RWPE1 (cell line): ENCODE measurements at regions of chr17 and their contacts with region 1.

Region 1: GRCh38 chr17:2416010-2416734 is 15.3 kb upstream of the MNT start:
- DNase-seq: peak; percentile 69
- H3K27ac ChIP-seq: peak overlapping the region; percentile 50
- CTCF ChIP-seq: peak; percentile 93

Region 2: DNA sequence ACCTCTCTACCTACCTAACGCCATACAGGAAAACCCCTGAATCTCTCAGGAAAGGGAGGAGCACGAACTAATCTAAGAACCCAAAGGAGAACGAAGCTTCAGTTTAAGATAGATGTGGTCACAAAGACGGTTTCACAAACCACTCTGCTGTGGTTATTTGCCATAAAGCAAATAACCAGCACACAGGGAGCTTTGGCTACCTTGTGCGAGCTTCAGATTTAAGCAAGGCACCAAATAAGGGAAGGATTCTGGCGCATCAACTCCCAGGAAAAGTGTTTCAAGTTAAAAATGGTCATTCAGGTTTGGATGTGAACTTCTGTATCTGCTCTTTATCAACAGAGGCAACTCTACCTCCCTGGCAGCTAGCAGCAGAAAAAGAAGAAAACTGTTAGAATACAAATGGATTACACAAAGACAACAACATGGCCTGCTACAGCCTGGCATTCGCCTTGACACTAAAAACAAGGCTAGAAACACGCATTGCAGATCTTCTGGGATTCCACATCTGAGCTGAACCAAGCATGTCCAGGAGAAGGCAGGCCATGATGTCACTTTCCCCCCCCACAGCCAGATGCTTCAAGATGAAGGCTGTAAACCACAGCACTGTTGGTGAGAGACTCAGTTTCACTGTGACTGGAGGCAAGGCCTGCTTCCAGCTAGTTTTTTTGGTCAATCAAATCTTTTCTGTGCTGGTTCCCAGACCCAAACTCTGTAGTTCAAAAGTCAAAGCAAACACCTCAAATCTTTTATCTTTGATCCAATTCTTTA is 156.2 kb before region 1 on chr17:
- CTCF ChIA-PET with region 1: no interaction called
- POLR2A ChIA-PET with region 1: no interaction called
- DNase-seq: no peak
- H3K27ac ChIP-seq: no peak overlapping the region
- CTCF ChIP-seq: no peak

Region 3: DNA sequence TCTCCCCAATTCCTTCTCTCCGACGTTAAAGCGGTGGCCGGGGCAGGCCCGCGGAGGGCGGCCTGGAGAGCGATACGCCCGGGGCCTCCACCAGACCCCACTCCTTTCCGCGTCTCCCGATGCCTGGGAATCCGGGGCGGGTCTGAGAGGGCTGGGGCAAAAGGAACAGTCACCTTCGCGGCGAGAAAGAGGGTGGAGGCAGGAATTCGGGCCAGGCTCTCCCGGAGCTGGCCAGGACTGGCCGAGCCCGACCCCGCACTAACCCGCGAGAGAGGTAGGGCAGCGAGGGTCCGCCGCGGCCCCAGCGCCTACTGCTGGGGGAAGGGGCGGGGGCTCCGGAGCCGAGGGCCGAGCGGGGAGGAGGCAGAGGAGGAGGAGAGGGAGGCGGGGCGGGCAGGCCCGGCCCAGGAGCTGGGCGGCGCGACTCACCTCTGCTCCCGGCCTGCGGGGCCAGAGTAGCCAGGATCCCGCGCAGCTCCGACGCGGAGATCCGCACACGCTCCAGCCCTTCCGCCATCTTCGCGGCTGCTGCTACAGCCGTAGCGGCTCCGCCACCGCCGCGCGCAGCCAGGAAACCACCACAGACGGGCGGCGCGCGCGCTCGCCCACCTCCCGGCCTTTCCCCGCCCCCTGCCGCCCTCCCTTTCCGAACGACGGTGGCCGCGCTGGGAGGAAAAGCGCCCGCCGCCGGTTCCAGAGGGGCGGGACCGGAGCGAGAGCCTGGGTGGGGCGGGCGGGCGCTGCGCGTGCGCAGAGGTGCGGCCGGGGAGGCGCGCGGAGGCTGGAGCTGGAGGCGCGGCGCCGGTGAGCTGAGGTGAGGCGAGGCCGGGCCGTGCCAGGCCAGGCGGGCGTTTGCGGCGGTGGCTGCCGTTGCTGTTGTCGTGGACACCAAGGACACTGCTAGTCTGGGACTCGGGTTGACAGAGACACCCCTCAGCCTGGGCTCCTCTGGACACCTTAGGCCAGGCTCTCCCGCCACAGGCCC is 112.7 kb before region 1 on chr17 and contains the starts of genes SMG6 and SRR:
- CTCF ChIA-PET with region 1: no interaction called
- POLR2A ChIA-PET with region 1: interaction called, 10 read pairs
- DNase-seq: peak; percentile 99
- H3K27ac ChIP-seq: peak within 1 kb of the TSS; percentile 92
- CTCF ChIP-seq: no peak